ENCODE measurements at regions of chr11 and their contacts with region 1.

Region 1: DNA sequence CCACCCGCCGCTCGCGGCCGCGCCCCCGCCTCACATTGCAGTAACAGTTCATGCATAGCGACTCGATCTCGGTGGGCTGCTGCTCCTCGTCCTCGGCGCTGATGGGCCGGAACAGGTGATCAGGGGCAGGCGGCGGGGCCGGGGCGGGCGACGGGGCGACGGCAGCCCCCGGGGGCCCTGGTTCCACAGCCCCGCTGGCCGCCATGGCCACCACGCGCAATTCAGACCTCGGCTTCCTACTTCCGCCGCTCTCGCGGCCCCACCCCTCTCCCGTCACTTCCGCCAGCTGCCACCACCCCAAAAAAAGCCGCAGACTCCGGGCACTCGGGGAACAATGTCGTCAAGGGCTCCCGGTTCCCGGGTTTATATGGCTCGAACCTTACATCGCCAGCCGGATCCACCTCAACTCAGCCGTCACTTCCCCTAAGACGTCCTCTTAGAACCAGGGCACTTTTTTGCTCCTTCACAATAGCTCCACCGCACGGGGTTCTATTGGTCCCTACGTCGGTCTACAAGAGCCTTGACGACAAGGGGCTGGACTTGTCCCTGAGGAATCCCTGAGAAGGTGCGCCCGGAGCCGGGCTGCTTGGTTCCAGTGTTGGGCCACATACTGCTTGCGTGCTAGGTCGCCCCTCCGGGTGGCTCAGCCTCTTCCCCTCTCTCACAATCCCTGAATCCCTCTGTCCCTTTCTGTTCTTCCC is at the start of gene ZPR1:
- DNase-seq: no peak
- ATAC-seq: peak; percentile 94
- H3K4me3 ChIP-seq: peak within 1 kb of the TSS; percentile 86 to 97
- H3K27ac ChIP-seq: peak within 1 kb of the TSS; percentile 95
- H3K4me1 ChIP-seq: peaks cover 15% of the 10 kb centered on the region
- H3K27me3 ChIP-seq: no peaks in the 10 kb centered on the region
- CTCF ChIP-seq: no peak
- total RNA-seq, gene ZPR1: 139 TPM

Region 2: DNA sequence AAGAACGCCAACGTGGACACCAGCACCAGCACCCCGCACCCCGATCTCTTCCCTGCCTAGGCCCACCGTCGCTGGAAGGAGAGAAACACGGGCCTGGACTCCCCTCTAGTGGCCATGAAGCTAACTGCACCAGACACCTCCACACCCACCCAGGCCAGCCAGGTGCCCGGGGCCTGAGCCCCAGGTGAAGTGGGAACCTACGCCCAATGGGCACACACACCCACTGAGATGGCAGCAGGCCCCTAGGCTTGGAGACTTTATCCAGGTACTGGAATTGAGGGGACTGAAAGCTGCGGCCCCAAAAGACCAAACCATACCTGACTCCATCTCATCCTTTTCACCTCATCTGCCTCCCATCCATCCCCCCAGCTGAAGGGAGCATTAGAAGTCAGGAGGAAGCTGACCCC is 96.2 kb before region 1 on chr11:
- CTCF ChIA-PET with region 1: no interaction called
- POLR2A ChIA-PET with region 1: no interaction called
- in situ Hi-C with region 1: no loop called
- intact Hi-C with region 1: no loop called
- DNase-seq: peak; percentile 30
- ATAC-seq: peak; percentile 77
- H3K4me3 ChIP-seq: no peak overlapping the region
- H3K27ac ChIP-seq: no peak overlapping the region
- H3K4me1 ChIP-seq: no peaks in the 10 kb centered on the region
- H3K27me3 ChIP-seq: no peaks in the 10 kb centered on the region; the same call in 1 of the 2 replicates
- CTCF ChIP-seq: peak; percentile 97

Region 3: DNA sequence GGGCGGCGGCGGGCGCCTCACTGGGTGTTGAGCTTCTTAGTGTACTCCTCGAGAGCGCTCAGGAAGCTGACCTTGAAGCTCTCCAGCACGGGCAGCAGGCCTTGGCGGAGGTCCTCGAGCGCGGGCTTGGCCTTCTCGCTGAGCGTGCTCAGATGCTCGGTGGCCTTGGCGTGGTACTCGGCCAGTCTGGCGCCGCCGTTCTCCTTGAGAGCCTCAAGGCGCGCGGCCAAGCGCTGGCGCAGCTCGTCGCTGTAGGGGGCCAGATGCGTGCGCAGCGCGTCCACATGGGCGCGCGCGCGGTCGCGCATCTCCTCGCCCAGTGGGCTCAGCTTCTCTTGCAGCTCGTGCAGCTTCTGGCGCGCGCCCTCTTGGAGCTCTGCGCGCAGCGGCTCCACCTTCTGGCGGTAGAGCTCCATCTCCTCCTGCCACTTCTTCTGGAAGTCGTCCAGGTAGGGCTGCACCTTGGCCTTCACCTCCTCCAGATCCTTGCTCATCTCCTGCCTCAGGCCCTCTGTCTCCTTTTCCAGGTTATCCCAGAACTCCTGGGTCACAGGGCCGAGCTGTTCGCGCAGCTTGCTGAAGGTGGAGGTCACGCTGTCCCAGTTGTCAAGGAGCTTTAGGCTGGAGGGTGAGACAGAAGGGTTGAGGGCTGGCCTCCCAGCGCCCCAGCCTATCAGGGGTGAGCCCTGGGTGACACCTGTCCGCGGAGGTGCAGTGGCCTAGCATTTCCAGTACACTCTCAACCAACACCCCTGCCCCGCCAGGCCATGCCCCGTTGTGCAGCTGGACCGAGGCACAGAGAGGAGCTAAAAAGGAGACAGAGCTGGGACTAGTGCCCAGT is 48.1 kb after region 1 on chr11:
- CTCF ChIA-PET with region 1: interaction called, 76 read pairs
- POLR2A ChIA-PET with region 1: interaction called, 7 read pairs
- in situ Hi-C with region 1: no loop called
- intact Hi-C with region 1: loop called (anchors 5 kb)
- DNase-seq: peak; percentile 53
- ATAC-seq: peak; percentile 92
- H3K4me3 ChIP-seq: peak overlapping the region; percentile 31 to 58
- H3K27ac ChIP-seq: peak overlapping the region; percentile 13; the same call in 1 of the 2 replicates
- H3K4me1 ChIP-seq: peaks cover 4% of the 10 kb centered on the region; the same call in 1 of the 2 replicates
- H3K27me3 ChIP-seq: no peaks in the 10 kb centered on the region
- CTCF ChIP-seq: peak; percentile 95

Region 4: GRCh38 chr11:117002639-117003299 is 214.8 kb after region 1 on chr11:
- CTCF ChIA-PET with region 1: no interaction called
- POLR2A ChIA-PET with region 1: no interaction called
- in situ Hi-C with region 1: loop called (anchors 10 kb)
- intact Hi-C with region 1: no loop called
- DNase-seq: no peak
- ATAC-seq: no peak
- H3K4me3 ChIP-seq: no peak overlapping the region
- H3K27ac ChIP-seq: no peak overlapping the region
- H3K4me1 ChIP-seq: no peaks in the 10 kb centered on the region
- H3K27me3 ChIP-seq: no peaks in the 10 kb centered on the region
- CTCF ChIP-seq: no peak